ENCODE measurements at regions of chr11 and their contacts with region 1.

Region 1: DNA sequence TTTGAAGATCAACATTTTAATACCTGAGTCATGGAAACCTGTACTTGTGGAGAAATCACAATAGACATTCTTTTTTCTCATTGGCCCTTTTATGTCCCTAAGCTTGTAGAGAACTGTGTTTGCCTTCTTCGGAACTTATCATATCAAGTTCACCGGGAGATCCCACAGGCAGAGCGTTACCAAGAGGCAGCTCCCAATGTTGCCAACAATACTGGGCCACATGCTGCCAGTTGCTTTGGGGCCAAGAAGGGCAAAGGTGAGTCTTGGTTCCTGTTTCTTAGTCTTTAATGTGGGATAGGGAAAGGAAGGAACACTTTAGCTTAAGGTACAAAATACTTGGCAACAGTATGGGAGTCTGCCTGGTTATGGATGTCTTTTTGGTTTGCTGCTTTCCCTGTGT is 44.2 kb downstream of the CTNND1 start:
- DNase-seq: no peak
- H3K4me3 ChIP-seq: no peak overlapping the region
- H3K27ac ChIP-seq: no peak overlapping the region
- H3K4me1 ChIP-seq: no peaks in the 10 kb centered on the region
- H3K27me3 ChIP-seq: no peaks in the 10 kb centered on the region
- CTCF ChIP-seq: no peak
- EP300 ChIP-seq: no peak
- POLR2A ChIP-seq: no peak
- RAD21 ChIP-seq: no peak

Region 2: DNA sequence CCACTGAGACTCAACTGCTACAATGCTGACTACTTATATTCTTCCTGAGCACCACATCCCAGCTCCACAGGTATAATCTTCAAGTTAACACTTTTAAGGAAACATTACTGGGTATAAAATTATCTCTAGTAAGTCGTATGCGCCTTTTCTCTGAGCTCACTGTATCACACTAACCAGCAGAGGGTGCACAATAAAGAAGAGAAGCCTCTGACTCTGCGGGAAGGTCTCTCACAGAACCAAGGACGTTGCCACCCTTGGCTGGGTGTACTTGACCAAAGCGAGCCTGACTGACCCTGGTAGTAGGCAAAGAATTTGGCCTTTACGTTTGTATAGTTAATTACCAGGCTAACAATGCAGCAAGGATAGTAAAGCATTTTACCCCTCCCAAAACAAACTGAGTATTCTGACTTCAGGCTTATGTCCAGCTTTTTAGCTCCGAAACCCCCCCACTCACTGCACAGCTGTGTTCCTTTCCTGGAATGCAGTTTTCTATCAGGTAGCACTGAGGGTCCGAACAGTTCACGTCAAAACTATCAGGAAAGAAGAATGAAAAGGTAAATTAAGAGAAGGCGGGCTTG is 54.0 kb before region 1 on chr11 and contains the start of gene BTBD18:
- CTCF ChIA-PET with region 1: interaction called, 182 read pairs
- POLR2A ChIA-PET with region 1: interaction called, 20 read pairs
- DNase-seq: peak in 1 of 2 experiments; percentile 54
- H3K4me3 ChIP-seq: no peak within 1 kb of the TSS
- H3K27ac ChIP-seq: no peak within 1 kb of the TSS; the same call in 1 of the 2 replicates
- H3K4me1 ChIP-seq: no peaks in the 10 kb centered on the region; a peak in 1 of 7 replicates
- H3K27me3 ChIP-seq: no peaks in the 10 kb centered on the region
- CTCF ChIP-seq: peak in 2 of 3 experiments; percentile 58 to 61; a peak in 3 of 4 replicates
- EP300 ChIP-seq: no peak
- POLR2A ChIP-seq: no peak
- RAD21 ChIP-seq: peak; percentile 62 to 78
- total RNA-seq, gene BTBD18: not detected in 2 replicates

Region 3: GRCh38 chr11:57920971-57921370 is 115.2 kb after region 1 on chr11:
- CTCF ChIA-PET with region 1: no interaction called
- POLR2A ChIA-PET with region 1: no interaction called
- DNase-seq: no peak
- H3K4me3 ChIP-seq: no peak overlapping the region
- H3K27ac ChIP-seq: no peak overlapping the region
- H3K4me1 ChIP-seq: no peaks in the 10 kb centered on the region
- H3K27me3 ChIP-seq: no peaks in the 10 kb centered on the region
- CTCF ChIP-seq: no peak
- EP300 ChIP-seq: no peak
- POLR2A ChIP-seq: no peak
- RAD21 ChIP-seq: no peak